GM12878 (cell line): ENCODE measurements at regions of chr1 and their contacts with region 1.

Region 1: GRCh38 chr1:199123615-199124014 is 484.8 kb downstream of the PTPRC start:
- DNase-seq: no peak
- ATAC-seq: no peak
- H3K4me3 ChIP-seq: no peak overlapping the region
- H3K27ac ChIP-seq: no peak overlapping the region
- H3K4me1 ChIP-seq: no peaks in the 10 kb centered on the region
- H3K27me3 ChIP-seq: no peaks in the 10 kb centered on the region
- CTCF ChIP-seq: no peak
- EP300 ChIP-seq: no peak
- POLR2A ChIP-seq: no peak
- RAD21 ChIP-seq: no peak

Region 2: DNA sequence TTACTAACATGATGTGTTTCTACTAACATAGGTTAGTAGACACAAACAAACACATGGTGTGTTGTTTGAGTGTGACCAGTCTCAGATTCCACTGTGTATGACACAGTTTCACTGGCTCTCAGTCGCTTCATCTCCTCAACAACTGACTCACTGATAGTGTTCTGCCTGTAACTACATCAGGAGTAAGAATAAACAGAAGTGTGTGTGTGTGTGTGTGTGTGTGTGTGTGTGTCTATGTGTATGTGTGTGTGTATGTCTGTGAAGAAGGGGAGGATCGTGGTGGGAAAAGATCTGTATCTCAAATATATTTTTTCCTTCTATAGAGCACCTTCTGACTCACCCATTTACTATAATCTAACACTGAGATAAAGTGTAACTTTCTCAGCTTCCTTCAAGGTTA is 93.8 kb before region 1 on chr1:
- CTCF ChIA-PET with region 1: no interaction called
- POLR2A ChIA-PET with region 1: no interaction called
- RAD21 ChIA-PET with region 1: no interaction called
- SMC1A ChIA-PET with region 1: no interaction called
- in situ Hi-C with region 1: no loop called
- intact Hi-C with region 1: no loop called
- DNase-seq: no peak
- ATAC-seq: no peak
- H3K4me3 ChIP-seq: no peak overlapping the region
- H3K27ac ChIP-seq: no peak overlapping the region
- H3K4me1 ChIP-seq: no peaks in the 10 kb centered on the region
- H3K27me3 ChIP-seq: no peaks in the 10 kb centered on the region
- CTCF ChIP-seq: no peak
- EP300 ChIP-seq: no peak
- POLR2A ChIP-seq: no peak
- RAD21 ChIP-seq: no peak

Region 3: GRCh38 chr1:199089393-199090122 is 34.1 kb before region 1 on chr1:
- CTCF ChIA-PET with region 1: no interaction called
- POLR2A ChIA-PET with region 1: no interaction called
- RAD21 ChIA-PET with region 1: no interaction called
- SMC1A ChIA-PET with region 1: no interaction called
- in situ Hi-C with region 1: no loop called
- intact Hi-C with region 1: loop called (anchors 1 kb)
- DNase-seq: peak; percentile 60
- ATAC-seq: peak; percentile 97
- H3K4me3 ChIP-seq: no peak overlapping the region
- H3K27ac ChIP-seq: peak overlapping the region; percentile 59
- H3K4me1 ChIP-seq: peaks cover 6% of the 10 kb centered on the region
- H3K27me3 ChIP-seq: no peaks in the 10 kb centered on the region
- CTCF ChIP-seq: no peak
- EP300 ChIP-seq: peak; percentile 40 to 76
- POLR2A ChIP-seq: no peak
- RAD21 ChIP-seq: no peak